Activated B cell treated with CpG ODN at 0.5 μM for 24 hours (primary cell): ENCODE measurements at regions of chr17 and their contacts with region 1.

Region 1: DNA sequence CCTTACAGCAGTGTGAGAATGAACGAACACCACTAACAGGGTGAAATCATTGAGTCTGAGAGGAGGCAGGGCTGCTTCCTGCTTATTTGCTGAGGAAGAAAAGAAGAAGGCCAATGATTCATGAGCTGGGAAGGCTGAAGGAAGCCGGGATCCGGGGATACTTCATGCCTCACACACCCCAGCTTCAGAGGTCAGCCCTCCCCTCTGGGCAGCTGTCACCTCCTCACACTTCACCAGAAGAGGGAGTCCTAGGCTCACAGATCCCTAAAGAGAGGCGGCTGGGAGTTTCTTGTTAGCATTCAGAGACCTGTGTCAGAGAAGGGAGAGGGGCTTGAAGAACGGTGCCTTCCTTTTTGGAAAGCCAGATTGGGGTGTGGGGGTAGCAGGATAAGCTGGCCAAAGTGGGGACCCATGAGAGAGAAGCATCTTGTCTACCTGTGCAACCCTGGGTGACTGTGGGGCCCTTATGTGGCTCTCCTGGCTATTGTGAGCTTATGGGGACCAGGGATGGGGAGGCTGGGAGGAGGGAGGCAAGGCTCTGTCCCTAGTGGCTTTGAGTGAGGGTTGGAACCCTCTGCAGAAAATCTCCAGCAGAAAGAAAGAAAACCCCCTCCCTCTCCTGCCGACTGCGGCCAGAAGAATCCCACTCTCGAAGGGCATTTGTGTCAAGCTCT is 94.6 kb downstream of the RGS9 start:
- DNase-seq: no peak
- ATAC-seq: no peak
- H3K4me3 Mint-ChIP-seq: no peak overlapping the region
- H3K27ac Mint-ChIP-seq: no peak overlapping the region
- H3K4me1 Mint-ChIP-seq: peaks cover 11% of the 10 kb centered on the region
- H3K27me3 Mint-ChIP-seq: peaks cover 35% of the 10 kb centered on the region
- CTCF ChIP-seq: no peak

Region 2: GRCh38 chr17:65093930-65094329 is 137.9 kb before region 1 on chr17:
- CTCF ChIA-PET with region 1: no interaction called
- POLR2A ChIA-PET with region 1: no interaction called
- intact Hi-C with region 1: no loop called
- DNase-seq: no peak
- ATAC-seq: no peak
- H3K4me3 Mint-ChIP-seq: no peak overlapping the region
- H3K27ac Mint-ChIP-seq: no peak overlapping the region
- H3K4me1 Mint-ChIP-seq: peaks cover 4% of the 10 kb centered on the region
- H3K27me3 Mint-ChIP-seq: no peaks in the 10 kb centered on the region
- CTCF ChIP-seq: no peak

Region 3: GRCh38 chr17:65556014-65556909 is 324.5 kb after region 1 on chr17:
- CTCF ChIA-PET with region 1: no interaction called
- POLR2A ChIA-PET with region 1: no interaction called
- intact Hi-C with region 1: loop called (anchors 10 kb)
- DNase-seq: peak; percentile 57
- ATAC-seq: no peak
- H3K4me3 Mint-ChIP-seq: no peak overlapping the region
- H3K27ac Mint-ChIP-seq: no peak overlapping the region
- H3K4me1 Mint-ChIP-seq: peaks cover 8% of the 10 kb centered on the region
- H3K27me3 Mint-ChIP-seq: peaks cover 11% of the 10 kb centered on the region
- CTCF ChIP-seq: no peak

Region 4: DNA sequence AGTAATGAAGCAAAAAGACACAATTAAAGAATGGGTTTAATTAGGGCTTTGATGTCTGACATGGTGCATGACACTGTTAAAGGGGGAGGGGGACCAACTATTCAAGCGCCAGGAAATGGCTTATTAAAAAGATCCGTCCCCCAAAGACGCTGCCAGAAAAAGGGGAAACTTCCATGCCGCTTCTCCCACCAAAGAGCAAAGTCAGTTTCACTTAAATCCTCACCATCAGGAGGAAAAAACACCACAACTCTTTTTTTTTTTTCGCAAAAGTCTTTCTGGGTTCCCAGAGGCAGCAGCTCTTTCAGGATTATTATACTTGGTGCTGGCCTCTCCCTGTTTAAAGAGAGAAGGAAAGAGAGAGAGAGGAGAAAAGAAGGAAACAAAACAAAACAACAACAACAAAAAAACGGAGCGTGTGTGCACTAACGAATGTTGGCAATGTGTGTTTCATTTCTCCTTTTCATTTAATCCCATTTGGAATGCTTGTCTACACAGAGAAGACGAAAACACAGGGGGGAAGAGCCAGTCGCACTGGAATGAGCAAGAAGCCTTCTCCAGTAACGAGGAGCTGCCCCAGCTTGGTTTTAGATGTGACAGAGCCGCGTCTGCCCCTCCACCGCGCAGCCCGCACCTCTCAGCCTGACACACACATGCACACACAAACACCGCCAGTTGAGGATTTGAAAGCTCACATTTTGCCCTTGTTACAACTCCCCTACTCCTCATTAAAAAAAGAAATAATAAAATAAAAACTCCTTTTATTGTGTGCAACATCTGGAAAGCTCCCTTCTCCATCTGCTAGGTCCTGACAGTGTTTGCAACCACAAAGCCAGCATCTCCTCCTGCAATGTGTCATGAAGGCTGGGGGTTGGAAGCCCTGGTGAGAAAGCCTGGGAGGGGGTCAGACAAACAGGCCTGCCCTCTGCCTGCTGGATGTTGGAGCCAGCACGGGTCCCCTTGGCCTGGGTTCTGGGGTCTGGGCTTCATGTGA is 362.4 kb after region 1 on chr17:
- CTCF ChIA-PET with region 1: no interaction called
- POLR2A ChIA-PET with region 1: no interaction called
- intact Hi-C with region 1: no loop called
- DNase-seq: no peak
- ATAC-seq: no peak
- H3K4me3 Mint-ChIP-seq: no peak overlapping the region
- H3K27ac Mint-ChIP-seq: no peak overlapping the region
- H3K4me1 Mint-ChIP-seq: peaks cover 6% of the 10 kb centered on the region
- H3K27me3 Mint-ChIP-seq: peaks cover 13% of the 10 kb centered on the region
- CTCF ChIP-seq: no peak

Region 5: DNA sequence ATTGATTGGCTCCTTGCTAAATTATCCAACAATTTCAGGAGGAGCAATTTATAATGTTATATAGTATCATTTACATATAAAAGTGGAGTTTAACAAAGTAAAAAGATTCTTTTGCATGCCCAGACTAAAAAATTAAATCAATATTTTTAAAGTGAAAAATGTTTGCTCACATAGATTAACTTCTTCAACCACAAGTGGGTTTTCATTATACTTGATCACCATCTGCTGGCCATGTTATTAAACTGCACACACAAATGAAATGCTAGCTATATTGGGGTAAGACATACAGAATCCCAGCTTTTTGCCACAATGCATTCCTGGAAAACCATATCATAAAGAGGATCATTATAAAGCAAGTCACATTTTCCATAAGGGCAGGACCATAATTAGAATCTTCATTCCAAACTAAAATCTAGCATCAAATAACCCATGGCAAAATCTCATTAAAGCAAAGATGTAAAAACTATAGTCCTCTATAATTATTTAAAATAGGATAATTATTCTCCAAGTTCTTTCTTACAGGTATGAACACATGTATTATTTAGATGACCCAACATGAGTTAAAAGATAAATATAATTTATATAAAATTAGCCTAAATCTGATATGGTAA is 933.8 kb after region 1 on chr17:
- CTCF ChIA-PET with region 1: interaction called, 29 read pairs
- POLR2A ChIA-PET with region 1: no interaction called
- intact Hi-C with region 1: loop called (anchors 1 kb)
- DNase-seq: no peak
- ATAC-seq: no peak
- H3K4me3 Mint-ChIP-seq: no peak overlapping the region
- H3K27ac Mint-ChIP-seq: no peak overlapping the region
- H3K4me1 Mint-ChIP-seq: no peaks in the 10 kb centered on the region
- H3K27me3 Mint-ChIP-seq: no peaks in the 10 kb centered on the region
- CTCF ChIP-seq: peak; percentile 84